ENCODE measurements at regions of chr19 and their contacts with region 1.

Region 1: GRCh38 chr19:56080669-56081401 is 40.3 kb downstream of the ZNF787 start:
- DNase-seq: peak in 1 of 2 experiments; percentile 94
- H3K4me3 ChIP-seq: peak overlapping the region; percentile 38 to 74 (median 46); a peak in 7 of 8 replicates
- H3K27ac ChIP-seq: no peak overlapping the region
- H3K4me1 ChIP-seq: peaks cover 0 to 14% (median 6%) of the 10 kb centered on the region in 4 experiments; a peak in 6 of 7 replicates
- H3K27me3 ChIP-seq: no peaks in the 10 kb centered on the region
- CTCF ChIP-seq: peak; percentile 70 to 86 (median 72)
- EP300 ChIP-seq: peak in 1 of 2 experiments; percentile 16; a peak in 1 of 3 replicates
- POLR2A ChIP-seq: no peak
- RAD21 ChIP-seq: peak; percentile 58 to 65

Region 2: DNA sequence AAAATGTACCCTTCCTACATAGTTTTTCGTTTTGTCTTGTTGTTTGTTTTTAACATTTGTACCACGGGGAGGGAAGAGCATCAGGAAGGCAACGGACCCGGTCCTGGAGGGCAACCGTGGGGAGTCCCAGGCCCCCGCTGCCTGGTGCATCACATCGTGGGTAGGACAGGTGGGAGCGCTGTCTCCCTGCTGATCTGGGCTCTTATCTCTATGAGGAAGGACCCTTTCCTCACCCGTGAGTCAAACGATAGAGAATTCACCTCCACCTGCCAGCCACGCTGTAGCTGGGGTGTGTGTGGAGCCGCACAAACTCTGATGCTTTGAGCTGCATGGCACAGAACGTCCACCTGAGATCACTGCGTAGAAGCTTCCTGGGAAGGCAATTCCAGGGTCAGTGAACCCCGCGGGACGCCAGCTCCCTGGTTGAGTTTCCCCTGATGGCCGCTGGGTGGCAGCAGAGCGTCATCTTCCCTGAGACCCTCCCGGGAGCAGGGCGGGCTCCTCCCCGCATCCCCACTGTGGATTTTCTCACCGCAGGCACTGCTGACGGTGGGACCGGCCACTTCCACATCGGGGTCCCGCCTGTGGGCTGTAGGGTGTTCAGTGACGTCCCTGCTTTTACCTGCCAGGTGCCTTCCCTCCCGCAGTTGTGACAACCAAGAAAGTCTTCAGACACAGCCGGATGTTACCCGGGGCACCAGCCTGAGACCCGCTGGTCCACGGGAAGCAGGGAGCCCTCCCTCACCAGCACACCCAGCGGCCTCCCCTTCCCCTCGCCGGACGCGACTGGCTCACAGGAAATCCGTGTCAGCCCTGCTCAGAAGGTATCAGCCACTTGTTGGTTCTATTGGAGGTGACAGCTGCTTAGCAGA is 14.4 kb before region 1 on chr19:
- CTCF ChIA-PET with region 1: interaction called, 92 read pairs
- POLR2A ChIA-PET with region 1: interaction called, 5 read pairs
- DNase-seq: peak in 1 of 2 experiments; percentile 94
- H3K4me3 ChIP-seq: peak overlapping the region in 2 of 4 experiments; percentile 5 to 48; a peak in 4 of 8 replicates
- H3K27ac ChIP-seq: no peak overlapping the region
- H3K4me1 ChIP-seq: peaks cover 0 to 3% (median 0%) of the 10 kb centered on the region in 4 experiments; a peak in 2 of 7 replicates
- H3K27me3 ChIP-seq: no peaks in the 10 kb centered on the region; a peak in 1 of 7 replicates
- CTCF ChIP-seq: peak; percentile 84 to 93 (median 89)
- EP300 ChIP-seq: no peak
- POLR2A ChIP-seq: no peak
- RAD21 ChIP-seq: peak; percentile 83

Region 3: DNA sequence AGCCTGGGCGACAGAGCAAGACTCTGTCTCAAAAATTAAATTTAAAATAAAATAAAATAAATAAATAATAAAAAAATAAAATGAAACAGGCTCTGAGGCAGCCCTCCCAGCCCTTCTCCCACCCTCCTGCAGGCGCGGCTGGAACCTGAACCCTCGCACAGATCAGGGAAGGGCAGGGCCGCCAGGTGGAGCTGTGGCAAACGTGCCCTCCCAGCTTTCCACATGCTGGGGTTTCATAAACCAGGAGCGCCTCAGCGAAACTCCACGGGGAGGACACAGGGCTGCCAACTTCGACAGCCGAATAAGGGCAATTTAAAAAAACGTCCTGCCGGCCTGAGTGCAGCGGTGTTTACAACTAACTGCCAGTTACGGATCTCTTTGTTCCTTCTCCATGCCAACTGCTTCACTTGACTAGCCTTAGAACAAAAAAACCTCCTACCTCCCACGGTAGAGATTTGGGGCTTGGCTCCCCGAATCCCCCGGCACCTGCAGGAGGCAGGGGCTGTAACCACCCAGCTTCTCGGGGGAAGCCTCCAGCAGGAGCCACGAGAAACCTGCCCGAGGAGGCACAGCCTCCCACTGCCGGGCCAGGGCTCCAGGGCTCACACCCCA is 24.4 kb after region 1 on chr19:
- CTCF ChIA-PET with region 1: interaction called, 12 read pairs
- POLR2A ChIA-PET with region 1: interaction called, 9 read pairs
- DNase-seq: peak; percentile 61 to 89
- H3K4me3 ChIP-seq: no peak overlapping the region
- H3K27ac ChIP-seq: no peak overlapping the region
- H3K4me1 ChIP-seq: peaks cover 0 to 23% (median 14%) of the 10 kb centered on the region in 4 experiments; a peak in 6 of 7 replicates
- H3K27me3 ChIP-seq: no peaks in the 10 kb centered on the region; a peak in 1 of 7 replicates
- CTCF ChIP-seq: peak; percentile 81 to 91 (median 91)
- EP300 ChIP-seq: no peak
- POLR2A ChIP-seq: no peak
- RAD21 ChIP-seq: peak; percentile 69 to 73

Region 4: GRCh38 chr19:56170261-56170660 is 89.4 kb after region 1 on chr19:
- CTCF ChIA-PET with region 1: interaction called, 13 read pairs
- POLR2A ChIA-PET with region 1: interaction called, 4 read pairs
- DNase-seq: no peak
- H3K4me3 ChIP-seq: no peak overlapping the region
- H3K27ac ChIP-seq: no peak overlapping the region
- H3K4me1 ChIP-seq: no peaks in the 10 kb centered on the region
- H3K27me3 ChIP-seq: no peaks in the 10 kb centered on the region
- CTCF ChIP-seq: no peak
- EP300 ChIP-seq: no peak
- POLR2A ChIP-seq: no peak
- RAD21 ChIP-seq: no peak

Region 5: DNA sequence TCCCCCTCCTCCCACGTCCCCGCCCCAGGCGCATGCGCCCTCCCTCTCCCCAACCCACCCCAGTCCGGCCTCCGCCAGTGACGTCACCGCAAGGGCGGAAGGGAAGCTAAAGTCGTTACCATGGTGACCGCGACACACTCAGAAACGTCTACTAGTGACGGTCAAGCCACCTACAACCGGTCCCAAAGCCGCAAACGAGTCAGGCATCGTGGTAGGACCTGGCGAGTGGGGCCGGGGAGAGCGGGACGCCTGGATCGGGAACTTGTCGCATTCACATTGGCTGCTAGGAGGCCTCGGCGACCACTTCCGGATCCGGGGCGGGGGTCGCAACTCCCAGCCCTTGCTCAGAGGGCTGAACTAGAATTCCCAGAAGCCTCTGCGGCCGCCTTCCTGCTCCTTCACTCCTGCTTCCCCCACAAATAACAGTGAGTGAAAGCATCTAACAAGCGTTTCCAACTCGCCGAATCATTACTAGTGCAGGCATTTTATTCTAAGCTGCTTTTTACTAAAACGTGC is 233.8 kb after region 1 on chr19 and contains the start of gene ZSCAN5A:
- CTCF ChIA-PET with region 1: interaction called, 13 read pairs
- POLR2A ChIA-PET with region 1: interaction called, 3 read pairs
- DNase-seq: peak; percentile 66 to 95
- H3K4me3 ChIP-seq: peak within 1 kb of the TSS; percentile 71 to 99 (median 90)
- H3K27ac ChIP-seq: peak within 1 kb of the TSS; percentile 98
- H3K4me1 ChIP-seq: peaks cover 0 to 3% (median 1%) of the 10 kb centered on the region in 4 experiments; a peak in 2 of 7 replicates
- H3K27me3 ChIP-seq: no peaks in the 10 kb centered on the region
- CTCF ChIP-seq: peak in 1 of 3 experiments; percentile 11; a peak in 1 of 4 replicates
- EP300 ChIP-seq: no peak
- POLR2A ChIP-seq: peak in 1 of 2 experiments; percentile 82; a peak in 2 of 3 replicates
- RAD21 ChIP-seq: no peak
- total RNA-seq, gene ZSCAN5A: 11.0 and 15.0 TPM in 2 replicates

Measured in H1 (cell line).